ENCODE measurements at regions of chr11 and their contacts with region 1.

Region 1: DNA sequence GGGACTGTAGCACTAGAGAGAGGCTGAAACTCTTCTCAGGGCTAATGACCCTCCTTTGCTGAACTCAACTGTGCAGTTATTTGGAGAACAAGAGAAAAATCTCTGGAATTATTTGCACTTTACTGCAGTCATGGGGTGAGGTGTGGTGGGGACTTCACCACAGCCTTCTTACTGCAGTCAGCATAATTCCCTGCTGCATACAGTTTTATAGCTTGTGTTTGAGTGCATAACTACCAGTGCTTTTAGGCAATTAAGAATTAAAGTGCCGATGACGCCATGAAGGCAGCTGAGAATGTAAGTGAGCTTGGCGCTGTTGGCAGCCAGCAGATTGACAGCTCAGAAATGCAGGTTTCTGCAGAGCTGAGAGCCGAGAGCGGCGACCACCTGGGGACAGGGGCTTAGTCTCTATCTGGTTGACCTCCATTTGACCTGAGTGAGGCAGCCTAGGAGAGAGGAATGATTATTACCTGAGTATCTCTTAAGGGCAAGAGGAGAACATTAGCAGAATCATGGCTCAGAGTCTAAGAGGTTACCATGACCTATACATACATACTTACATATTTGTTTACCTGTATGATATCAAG is 830.0 kb downstream of the NTM start:
- DNase-seq: no peak
- ATAC-seq: no peak
- H3K4me3 ChIP-seq: no peak overlapping the region
- H3K27ac ChIP-seq: no peak overlapping the region
- H3K4me1 ChIP-seq: no peaks in the 10 kb centered on the region
- H3K27me3 ChIP-seq: no peaks in the 10 kb centered on the region
- CTCF ChIP-seq: no peak

Region 2: DNA sequence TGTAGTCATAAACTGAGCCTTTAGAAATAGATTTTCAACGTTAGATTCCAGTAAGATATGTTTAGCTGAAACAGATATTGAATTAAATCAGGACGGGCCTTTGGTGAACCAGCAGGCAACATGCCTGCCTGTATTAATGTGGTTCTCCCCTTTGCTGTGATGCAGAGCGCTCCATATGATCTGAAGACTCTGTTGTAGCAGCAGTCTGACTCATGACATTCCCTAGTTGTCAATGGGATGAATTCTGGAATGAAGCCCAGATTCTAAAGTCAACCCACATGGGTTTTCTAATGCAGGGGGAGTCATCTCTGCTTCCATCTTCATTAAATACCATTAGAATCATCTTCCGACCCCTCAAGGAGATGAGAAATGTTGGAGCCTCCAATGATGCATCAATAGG is 34.4 kb after region 1 on chr11:
- CTCF ChIA-PET with region 1: no interaction called
- POLR2A ChIA-PET with region 1: no interaction called
- in situ Hi-C with region 1: no loop called
- intact Hi-C with region 1: loop called (anchors 1 kb)
- DNase-seq: no peak
- ATAC-seq: no peak
- H3K4me3 ChIP-seq: no peak overlapping the region
- H3K27ac ChIP-seq: no peak overlapping the region
- H3K4me1 ChIP-seq: no peaks in the 10 kb centered on the region
- H3K27me3 ChIP-seq: no peaks in the 10 kb centered on the region
- CTCF ChIP-seq: no peak

Region 3: GRCh38 chr11:132540581-132540980 is 340.1 kb after region 1 on chr11:
- CTCF ChIA-PET with region 1: no interaction called
- POLR2A ChIA-PET with region 1: no interaction called
- in situ Hi-C with region 1: no loop called
- intact Hi-C with region 1: no loop called
- DNase-seq: no peak
- ATAC-seq: no peak
- H3K4me3 ChIP-seq: no peak overlapping the region
- H3K27ac ChIP-seq: no peak overlapping the region
- H3K4me1 ChIP-seq: no peaks in the 10 kb centered on the region
- H3K27me3 ChIP-seq: no peaks in the 10 kb centered on the region
- CTCF ChIP-seq: no peak

Measured in Panc1 (cell line).